ENCODE measurements at regions of chr12 and their contacts with region 1.

Region 1: GRCh38 chr12:9707864-9708808 is 24.8 kb downstream of the CLECL1 start:
- DNase-seq: peak; percentile 48
- H3K4me3 Mint-ChIP-seq: peak overlapping the region; percentile 57
- H3K27ac Mint-ChIP-seq: peak overlapping the region; percentile 90
- H3K4me1 Mint-ChIP-seq: peaks cover 56% of the 10 kb centered on the region
- H3K27me3 Mint-ChIP-seq: no peaks in the 10 kb centered on the region

Region 2: GRCh38 chr12:9331218-9331626 is 376.9 kb before region 1 on chr12:
- intact Hi-C with region 1: loop called (anchors 2 kb)
- DNase-seq: peak; percentile 47
- H3K4me3 Mint-ChIP-seq: no peak overlapping the region
- H3K27ac Mint-ChIP-seq: no peak overlapping the region
- H3K4me1 Mint-ChIP-seq: peaks cover 20% of the 10 kb centered on the region
- H3K27me3 Mint-ChIP-seq: peaks cover under 1% of the 10 kb centered on the region

Region 3: DNA sequence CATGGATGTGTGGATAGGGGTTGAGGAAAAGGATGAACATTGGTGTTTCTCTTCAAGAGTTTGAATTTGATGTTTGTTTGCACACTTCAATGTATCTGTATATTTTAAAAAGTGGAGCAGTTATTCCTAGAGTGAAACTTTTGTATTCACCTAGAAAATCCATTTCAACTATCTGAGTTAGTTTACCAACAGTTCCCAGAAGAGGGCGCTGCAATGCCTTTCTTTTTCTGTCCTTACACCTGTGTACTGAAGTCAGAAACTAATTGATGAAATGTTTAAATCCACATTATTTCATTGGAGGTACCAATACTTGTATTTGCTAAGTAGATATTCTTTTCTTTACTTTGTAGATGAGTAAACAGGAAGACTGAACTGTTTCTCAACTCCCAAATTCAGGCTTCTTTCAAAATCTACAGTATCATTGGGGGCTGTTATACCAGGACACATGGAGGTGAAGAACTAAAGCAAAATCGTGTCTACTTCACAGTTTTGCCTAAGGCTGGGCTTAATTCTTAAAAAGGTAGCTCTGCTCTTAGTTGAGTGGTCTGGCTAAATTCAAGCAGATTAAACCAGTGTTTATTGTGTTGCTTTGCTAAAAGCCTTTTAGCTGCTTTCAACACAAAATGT is 73.8 kb before region 1 on chr12:
- intact Hi-C with region 1: loop called (anchors 1 kb)
- DNase-seq: peak; percentile 64
- H3K4me3 Mint-ChIP-seq: peak overlapping the region; percentile 60
- H3K27ac Mint-ChIP-seq: peak overlapping the region; percentile 63
- H3K4me1 Mint-ChIP-seq: peaks cover 60% of the 10 kb centered on the region
- H3K27me3 Mint-ChIP-seq: peaks cover 3% of the 10 kb centered on the region

Region 4: DNA sequence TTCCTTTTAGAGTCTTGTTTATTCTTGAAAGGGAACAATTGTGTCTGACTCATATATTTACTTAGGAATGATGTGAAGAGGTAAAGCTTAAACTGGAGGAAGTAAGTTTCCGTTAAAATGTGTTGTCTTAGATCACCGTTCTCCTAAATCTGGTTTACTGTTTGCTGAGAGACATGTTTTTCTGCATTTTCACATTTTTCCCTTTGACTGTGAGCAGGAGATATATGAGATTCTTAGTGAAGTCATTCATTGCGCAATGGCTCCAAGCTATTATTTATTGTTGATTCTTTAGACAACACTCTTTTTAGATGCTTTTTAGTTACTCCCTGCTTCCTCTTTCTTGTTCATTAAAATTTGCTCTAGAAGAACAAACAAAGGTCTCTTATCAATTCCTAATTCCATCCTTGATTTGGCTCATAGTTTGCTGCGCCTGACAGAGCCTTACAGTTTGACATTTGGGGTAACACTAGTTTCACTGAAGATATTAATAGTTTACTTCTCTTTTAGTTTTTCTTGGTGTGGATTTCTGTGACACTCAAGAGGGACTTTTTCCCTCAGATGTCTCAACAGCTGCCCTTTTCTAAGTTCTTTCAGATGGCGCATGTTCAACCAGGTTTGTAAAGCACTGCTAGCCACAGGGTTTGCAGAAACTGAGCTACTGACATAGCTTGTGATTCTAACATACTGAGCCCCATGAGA is 13.4 kb after region 1 on chr12:
- intact Hi-C with region 1: loop called (anchors 1 kb)
- DNase-seq: no peak
- H3K4me3 Mint-ChIP-seq: no peak overlapping the region
- H3K27ac Mint-ChIP-seq: no peak overlapping the region
- H3K4me1 Mint-ChIP-seq: peaks cover 61% of the 10 kb centered on the region
- H3K27me3 Mint-ChIP-seq: peaks cover 4% of the 10 kb centered on the region

Region 5: GRCh38 chr12:9732921-9733461 is 24.9 kb after region 1 on chr12 and contains the start of gene CLECL1:
- intact Hi-C with region 1: loop called (anchors 2 kb)
- DNase-seq: no peak
- H3K4me3 Mint-ChIP-seq: peak within 1 kb of the TSS; percentile 87
- H3K27ac Mint-ChIP-seq: peak within 1 kb of the TSS; percentile 89
- H3K4me1 Mint-ChIP-seq: peaks cover 76% of the 10 kb centered on the region
- H3K27me3 Mint-ChIP-seq: no peaks in the 10 kb centered on the region
- total RNA-seq, gene CLECL1: 7.6 and 9.1 TPM in 2 replicates